ENCODE measurements at regions of chr11 and their contacts with region 1.

Region 1: GRCh38 chr11:44319552-44320288 is 9.8 kb upstream of the ALX4 start:
- DNase-seq: no peak
- H3K4me3 ChIP-seq: no peak overlapping the region
- CTCF ChIP-seq: no peak

Region 2: GRCh38 chr11:44246726-44247125 is 73.0 kb before region 1 on chr11:
- in situ Hi-C with region 1: loop called (anchors 5 kb)
- DNase-seq: peak; percentile 18
- H3K4me3 ChIP-seq: no peak overlapping the region
- CTCF ChIP-seq: no peak

Measured in astrocyte of the cerebellum (primary cell).